RWPE1 (cell line): ENCODE measurements at regions of chr17 and their contacts with region 1.

Region 1: GRCh38 chr17:74790161-74791054 is 14.3 kb upstream of the NAT9 start:
- DNase-seq: no peak
- H3K27ac ChIP-seq: no peak overlapping the region
- CTCF ChIP-seq: no peak

Region 2: GRCh38 chr17:74742153-74742515 is 48.3 kb before region 1 on chr17:
- CTCF ChIA-PET with region 1: interaction called, 12 read pairs
- POLR2A ChIA-PET with region 1: no interaction called
- DNase-seq: no peak
- H3K27ac ChIP-seq: no peak overlapping the region
- CTCF ChIP-seq: no peak

Region 3: DNA sequence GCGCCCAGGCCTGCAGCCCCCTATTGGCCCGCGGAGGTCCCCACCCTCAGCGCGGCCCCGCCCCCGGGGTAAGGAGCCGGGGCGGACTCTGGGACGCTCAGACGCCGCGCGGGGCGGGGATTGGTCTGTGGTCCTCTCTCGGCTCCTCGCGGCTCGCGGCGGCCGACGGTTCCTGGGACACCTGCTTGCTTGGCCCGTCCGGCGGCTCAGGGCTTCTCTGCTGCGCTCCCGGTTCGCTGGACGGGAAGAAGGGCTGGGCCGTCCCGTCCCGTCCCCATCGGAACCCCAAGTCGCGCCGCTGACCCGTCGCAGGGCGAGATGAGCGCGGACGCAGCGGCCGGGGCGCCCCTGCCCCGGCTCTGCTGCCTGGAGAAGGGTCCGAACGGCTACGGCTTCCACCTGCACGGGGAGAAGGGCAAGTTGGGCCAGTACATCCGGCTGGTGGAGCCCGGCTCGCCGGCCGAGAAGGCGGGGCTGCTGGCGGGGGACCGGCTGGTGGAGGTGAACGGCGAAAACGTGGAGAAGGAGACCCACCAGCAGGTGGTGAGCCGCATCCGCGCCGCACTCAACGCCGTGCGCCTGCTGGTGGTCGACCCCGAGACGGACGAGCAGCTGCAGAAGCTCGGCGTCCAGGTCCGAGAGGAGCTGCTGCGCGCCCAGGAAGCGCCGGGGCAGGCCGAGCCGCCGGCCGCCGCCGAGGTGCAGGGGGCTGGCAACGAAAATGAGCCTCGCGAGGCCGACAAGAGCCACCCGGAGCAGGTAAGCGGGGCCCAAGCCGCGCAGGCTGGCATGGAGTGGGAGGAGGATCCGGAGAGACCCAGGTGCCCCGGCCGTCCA is 41.7 kb before region 1 on chr17 and contains the start of gene NHERF1:
- CTCF ChIA-PET with region 1: interaction called, 10 read pairs
- POLR2A ChIA-PET with region 1: no interaction called
- DNase-seq: peak; percentile 96
- H3K27ac ChIP-seq: peak within 1 kb of the TSS; percentile 81
- CTCF ChIP-seq: 0 out of 2 replicates have a peak, but pooled peaks have one; percentile 0

Region 4: GRCh38 chr17:74859459-74860228 is 69.2 kb after region 1 on chr17 and contains the start of gene GRIN2C:
- CTCF ChIA-PET with region 1: interaction called, 30 read pairs
- POLR2A ChIA-PET with region 1: no interaction called
- DNase-seq: no peak
- H3K27ac ChIP-seq: no peak within 1 kb of the TSS
- CTCF ChIP-seq: peak; percentile 60

Region 5: DNA sequence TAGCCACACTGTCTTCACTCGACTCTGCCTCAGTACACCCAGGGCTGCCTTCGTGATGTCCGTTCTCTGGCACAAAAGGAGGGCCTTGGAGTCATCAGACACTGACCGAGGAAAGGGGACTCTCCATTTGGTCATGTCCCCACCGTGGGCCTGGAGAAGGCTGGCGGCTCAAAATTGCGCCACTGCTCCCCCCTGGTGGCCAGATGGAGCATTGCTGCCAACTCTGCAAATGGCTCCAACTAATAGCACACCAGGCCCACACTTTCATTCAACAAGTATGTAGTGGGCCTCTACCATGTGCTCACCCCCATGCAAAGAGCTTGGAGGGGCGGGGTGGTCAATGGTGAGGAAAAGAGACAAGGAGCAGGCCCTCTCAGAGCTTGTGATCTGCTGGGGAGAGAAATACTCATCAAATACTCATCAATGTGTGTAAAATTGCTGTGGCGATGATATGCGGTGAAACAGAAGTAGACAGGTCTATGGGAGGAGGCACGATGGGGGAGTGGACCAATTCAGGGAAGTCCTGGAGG is 74.5 kb after region 1 on chr17:
- CTCF ChIA-PET with region 1: interaction called, 30 read pairs
- POLR2A ChIA-PET with region 1: interaction called, 3 read pairs
- DNase-seq: peak; percentile 63
- H3K27ac ChIP-seq: peak overlapping the region; percentile 7; the same call in 1 of the 2 replicates
- CTCF ChIP-seq: peak; percentile 98